Testis (tissue), 5 donors: ENCODE measurements at regions of chr4 and their contacts with region 1.

Region 1: DNA sequence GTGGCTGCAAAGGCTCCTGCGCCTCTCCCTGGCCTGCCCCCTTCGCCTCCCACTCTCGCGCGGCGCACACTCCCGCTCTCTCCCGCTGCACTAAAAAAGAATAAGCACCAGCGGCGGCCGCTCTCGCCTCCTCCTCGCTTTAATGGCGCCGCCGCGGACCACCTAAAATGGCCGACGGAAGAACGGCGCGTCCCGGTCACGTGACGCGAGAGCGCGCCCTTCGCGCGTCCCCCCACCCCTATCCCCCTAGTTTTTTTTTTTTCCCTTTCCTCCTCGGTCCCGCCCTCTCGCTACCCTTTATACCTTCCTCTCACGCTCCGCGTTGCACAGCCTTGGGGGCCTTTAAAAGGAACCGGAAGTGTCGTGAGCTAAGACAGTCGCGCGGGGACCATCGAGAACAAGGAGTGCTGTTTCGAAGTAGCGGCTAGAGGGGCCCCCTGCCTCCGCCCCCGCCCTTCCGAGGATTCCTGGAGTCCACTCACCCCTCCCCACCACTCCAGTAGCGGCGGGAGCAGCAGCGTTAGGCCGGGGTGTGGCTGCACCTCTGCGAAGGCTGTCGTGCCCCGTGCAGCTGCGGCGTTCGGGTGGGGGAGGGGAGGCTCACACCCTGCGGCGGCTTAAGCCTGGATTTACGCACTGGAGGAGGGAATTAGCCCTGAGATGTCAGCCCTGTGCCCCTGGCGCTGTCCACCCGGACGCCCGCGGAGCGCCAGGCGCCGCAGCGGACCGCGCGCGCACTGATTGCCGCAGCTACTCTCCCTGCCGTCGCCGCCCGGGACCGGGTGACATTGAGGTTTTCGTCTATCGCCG is at the start of gene HNRNPD:
- DNase-seq: peak; percentile 99
- H3K4me3 ChIP-seq: peak within 1 kb of the TSS; percentile 98 to 99
- H3K27ac ChIP-seq: peak within 1 kb of the TSS; percentile 100
- H3K4me1 ChIP-seq: peaks cover 21% of the 10 kb centered on the region
- H3K27me3 ChIP-seq: no peaks in the 10 kb centered on the region
- CTCF ChIP-seq: no peak
- POLR2A ChIP-seq: peak; percentile 31
- total RNA-seq, gene HNRNPD: 114 to 118 TPM

Region 2: DNA sequence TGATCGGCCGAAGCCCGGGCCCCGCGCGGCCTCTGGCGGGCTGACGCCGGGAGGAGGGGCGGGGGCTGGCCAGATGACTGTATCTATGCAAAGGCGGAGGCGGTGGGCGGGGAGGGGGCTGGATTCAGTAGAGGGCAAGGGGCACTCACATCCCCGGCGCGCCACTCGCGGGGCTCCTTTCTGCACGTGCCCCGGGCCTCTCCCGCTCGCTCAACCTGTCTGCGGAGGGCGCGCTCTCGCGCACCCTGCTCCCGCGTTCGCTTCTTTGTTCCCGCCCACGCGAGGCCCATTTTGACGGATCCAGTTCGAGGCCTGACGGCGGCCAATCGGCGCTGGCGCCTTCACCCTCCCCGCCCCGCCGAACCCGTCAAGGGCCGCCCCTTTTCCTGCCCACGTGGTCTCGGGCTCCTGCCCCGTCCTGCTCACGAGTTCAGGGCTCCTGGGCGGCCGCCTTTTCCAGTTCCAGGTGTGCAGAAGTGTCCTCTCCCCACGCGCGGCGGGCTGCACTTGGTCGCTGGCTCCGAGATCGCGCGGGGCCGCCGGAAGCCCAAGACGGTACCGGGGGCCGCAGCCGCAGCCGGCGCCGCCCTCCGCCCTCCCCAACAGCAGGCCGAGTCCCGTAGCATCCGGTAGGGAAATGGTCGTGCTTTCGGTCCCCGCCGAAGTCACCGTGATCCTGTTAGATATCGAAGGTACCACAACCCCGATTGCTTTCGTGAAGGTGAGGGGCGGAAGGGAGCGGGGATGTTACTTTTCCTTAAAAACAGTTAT is 56.4 kb after region 1 on chr4 and contains the starts of genes ENOPH1 and HNRNPDL:
- intact Hi-C with region 1: loop called (anchors 5 kb)
- DNase-seq: peak; percentile 98
- H3K4me3 ChIP-seq: peak within 1 kb of the TSS; percentile 98
- H3K27ac ChIP-seq: peak within 1 kb of the TSS; percentile 98 to 99
- H3K4me1 ChIP-seq: peaks cover 9% of the 10 kb centered on the region
- H3K27me3 ChIP-seq: no peaks in the 10 kb centered on the region
- CTCF ChIP-seq: no peak
- POLR2A ChIP-seq: peak; percentile 72
- total RNA-seq, gene ENOPH1: 13.9 to 20.8 TPM
- total RNA-seq, gene HNRNPDL: 203 to 218 TPM

Region 3: DNA sequence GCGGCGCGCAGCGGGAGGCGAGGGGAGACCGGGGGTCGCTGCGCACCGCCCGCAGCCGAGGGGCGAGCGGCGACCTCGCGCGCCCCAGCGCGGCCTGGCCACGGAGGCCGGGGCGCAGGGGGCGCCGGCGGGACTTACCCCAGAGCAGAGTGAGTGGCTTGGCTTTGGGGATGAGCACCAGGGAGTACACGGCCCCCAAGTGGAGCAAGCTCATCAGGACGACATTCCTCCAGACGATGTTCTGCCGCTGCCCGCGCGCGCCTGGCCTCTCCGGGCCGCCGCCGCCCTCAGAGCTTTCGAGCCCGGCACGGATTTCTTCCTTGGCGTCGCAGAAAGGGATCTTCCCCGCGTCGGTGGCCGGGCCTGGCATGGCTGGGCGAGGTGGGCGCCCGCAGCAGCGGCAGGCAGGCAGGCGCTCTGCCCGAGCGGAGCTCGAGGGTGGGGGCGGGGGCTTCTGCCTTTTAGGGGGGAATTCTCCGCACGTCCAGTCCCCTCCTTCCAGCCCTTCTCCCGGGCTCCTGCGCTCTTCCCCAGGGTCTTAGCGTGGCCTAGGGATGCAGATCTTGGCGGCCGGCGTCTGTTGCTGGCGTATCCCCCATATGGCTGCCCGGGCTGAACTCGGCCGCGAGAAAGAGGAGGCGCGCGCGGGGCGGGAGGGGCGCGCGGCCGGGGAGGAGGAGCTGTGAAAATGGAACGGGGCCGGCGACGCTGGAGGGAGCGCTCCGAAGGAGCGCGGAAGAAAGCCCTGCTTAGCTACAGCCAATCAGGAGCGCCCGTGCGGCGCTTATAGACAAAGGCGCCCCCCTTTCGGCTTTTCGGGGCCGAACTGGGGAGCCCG is 424.4 kb after region 1 on chr4 and contains the start of gene SCD5:
- intact Hi-C with region 1: loop called (anchors 10 kb)
- DNase-seq: peak; percentile 92
- H3K4me3 ChIP-seq: peak within 1 kb of the TSS; percentile 75 to 95
- H3K27ac ChIP-seq: peak within 1 kb of the TSS; percentile 80 to 84
- H3K4me1 ChIP-seq: peaks cover 28% of the 10 kb centered on the region
- H3K27me3 ChIP-seq: no peaks in the 10 kb centered on the region
- CTCF ChIP-seq: no peak
- POLR2A ChIP-seq: no peak
- total RNA-seq, gene SCD5: 149 to 161 TPM